ENCODE measurements at regions of chr11 and their contacts with region 1.

Region 1: DNA sequence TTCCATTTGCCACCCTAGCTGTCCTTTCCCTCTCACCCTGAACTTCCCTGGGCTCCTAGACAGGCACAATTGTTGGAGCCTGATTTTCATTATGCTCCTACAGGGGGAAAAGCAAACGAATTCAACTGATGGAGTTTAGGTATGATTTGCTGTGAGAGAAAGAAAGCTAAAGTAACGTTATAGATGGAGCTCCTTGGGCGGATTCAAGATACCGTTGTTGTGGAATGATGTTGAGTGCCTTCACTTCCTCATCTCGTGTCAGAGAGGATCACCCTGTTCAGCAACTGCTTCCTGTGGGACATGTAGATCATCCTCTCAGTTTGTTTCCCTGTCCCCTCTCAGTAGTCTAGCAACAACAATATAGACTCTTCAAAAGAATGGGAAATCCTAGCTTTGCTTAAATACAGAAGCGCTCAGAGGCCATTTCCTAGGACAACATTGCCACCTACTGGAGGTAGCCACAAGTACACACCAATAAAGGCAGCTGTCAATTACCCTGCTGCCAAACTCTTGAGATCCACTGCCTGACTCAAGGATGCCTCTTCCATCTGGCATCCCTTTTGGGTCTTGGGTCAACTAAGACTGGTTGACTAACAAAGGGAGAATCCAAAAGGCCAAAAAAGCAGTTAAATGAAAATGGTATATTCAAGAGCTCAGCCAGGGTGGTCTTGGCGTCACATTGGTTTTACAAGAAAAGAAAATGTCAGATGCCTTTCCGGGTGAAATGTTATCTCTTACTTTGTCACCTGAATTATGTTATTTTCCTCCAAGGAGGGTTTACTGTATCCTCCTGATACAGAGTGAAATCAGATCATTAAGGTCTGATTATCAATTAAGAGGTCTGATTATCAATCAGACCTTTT is 13.5 kb upstream of the DTX4 start:
- DNase-seq: peak; percentile 54
- ATAC-seq: peak; percentile 96
- H3K4me3 Mint-ChIP-seq: no peak overlapping the region
- H3K27ac Mint-ChIP-seq: no peak overlapping the region
- H3K4me1 Mint-ChIP-seq: peaks cover 8% of the 10 kb centered on the region
- H3K27me3 Mint-ChIP-seq: no peaks in the 10 kb centered on the region
- CTCF ChIP-seq: peak; percentile 54

Region 2: GRCh38 chr11:58900479-58901420 is 257.7 kb before region 1 on chr11:
- CTCF ChIA-PET with region 1: interaction called, 25 read pairs
- POLR2A ChIA-PET with region 1: interaction called, 3 read pairs
- DNase-seq: peak; percentile 96
- ATAC-seq: peak; percentile 77
- H3K4me3 Mint-ChIP-seq: peak overlapping the region; percentile 62
- H3K27ac Mint-ChIP-seq: peak overlapping the region; percentile 42; the same call in 1 of the 2 replicates
- H3K4me1 Mint-ChIP-seq: peaks cover 45% of the 10 kb centered on the region
- H3K27me3 Mint-ChIP-seq: peaks cover 48% of the 10 kb centered on the region
- CTCF ChIP-seq: peak; percentile 59; the same call in 1 of the 2 replicates

Region 3: GRCh38 chr11:58963528-58964104 is 194.8 kb before region 1 on chr11:
- CTCF ChIA-PET with region 1: interaction called, 12 read pairs
- POLR2A ChIA-PET with region 1: no interaction called
- DNase-seq: peak; percentile 74
- ATAC-seq: peak; percentile 94
- H3K4me3 Mint-ChIP-seq: peak overlapping the region; percentile 64
- H3K27ac Mint-ChIP-seq: peak overlapping the region; percentile 78; the same call in 1 of the 2 replicates
- H3K4me1 Mint-ChIP-seq: peaks cover 26% of the 10 kb centered on the region
- H3K27me3 Mint-ChIP-seq: peaks cover 65% of the 10 kb centered on the region
- CTCF ChIP-seq: no peak

Region 4: GRCh38 chr11:59135648-59136461 is 22.6 kb before region 1 on chr11:
- CTCF ChIA-PET with region 1: interaction called, 38 read pairs
- POLR2A ChIA-PET with region 1: no interaction called
- DNase-seq: peak; percentile 93
- ATAC-seq: peak; percentile 100
- H3K4me3 Mint-ChIP-seq: peak overlapping the region; percentile 59
- H3K27ac Mint-ChIP-seq: no peak overlapping the region
- H3K4me1 Mint-ChIP-seq: peaks cover 2% of the 10 kb centered on the region; the same call in 1 of the 2 replicates
- H3K27me3 Mint-ChIP-seq: peaks cover 6% of the 10 kb centered on the region; the same call in 1 of the 2 replicates
- CTCF ChIP-seq: peak; percentile 92

Region 5: DNA sequence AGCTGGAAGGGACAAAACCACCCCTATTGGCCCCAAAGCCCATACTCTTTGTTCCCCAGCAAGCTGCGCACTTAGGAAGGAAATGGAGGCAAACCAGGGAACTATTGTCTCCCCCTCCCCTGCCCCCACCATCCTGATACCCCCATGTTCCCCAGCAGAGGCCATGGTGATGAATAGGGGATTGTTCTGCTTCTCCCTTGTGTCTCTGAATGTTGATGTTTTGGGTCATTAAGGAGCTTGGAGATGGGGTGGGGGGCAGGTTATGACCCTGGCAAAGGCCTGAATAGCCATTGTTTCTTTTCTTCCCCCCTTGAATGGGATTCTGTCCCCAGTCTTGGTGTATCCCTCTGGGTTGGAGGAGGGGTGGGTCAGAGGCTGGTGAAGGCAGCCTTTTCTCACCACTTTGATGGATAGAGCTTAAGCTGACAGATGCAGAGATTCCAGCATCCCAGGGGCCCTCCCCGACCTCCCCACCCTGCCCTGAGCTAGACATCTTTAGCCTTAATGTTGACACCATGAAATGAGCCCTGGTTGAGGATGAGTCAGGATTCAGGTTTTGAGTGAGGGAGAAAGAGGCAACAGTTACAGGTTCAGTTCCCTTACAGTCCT is 21.8 kb after region 1 on chr11:
- CTCF ChIA-PET with region 1: interaction called, 10 read pairs
- POLR2A ChIA-PET with region 1: no interaction called
- DNase-seq: no peak
- ATAC-seq: no peak
- H3K4me3 Mint-ChIP-seq: no peak overlapping the region
- H3K27ac Mint-ChIP-seq: no peak overlapping the region
- H3K4me1 Mint-ChIP-seq: peaks cover 34% of the 10 kb centered on the region
- H3K27me3 Mint-ChIP-seq: no peaks in the 10 kb centered on the region; the same call in 1 of the 2 replicates
- CTCF ChIP-seq: no peak

Region 6: DNA sequence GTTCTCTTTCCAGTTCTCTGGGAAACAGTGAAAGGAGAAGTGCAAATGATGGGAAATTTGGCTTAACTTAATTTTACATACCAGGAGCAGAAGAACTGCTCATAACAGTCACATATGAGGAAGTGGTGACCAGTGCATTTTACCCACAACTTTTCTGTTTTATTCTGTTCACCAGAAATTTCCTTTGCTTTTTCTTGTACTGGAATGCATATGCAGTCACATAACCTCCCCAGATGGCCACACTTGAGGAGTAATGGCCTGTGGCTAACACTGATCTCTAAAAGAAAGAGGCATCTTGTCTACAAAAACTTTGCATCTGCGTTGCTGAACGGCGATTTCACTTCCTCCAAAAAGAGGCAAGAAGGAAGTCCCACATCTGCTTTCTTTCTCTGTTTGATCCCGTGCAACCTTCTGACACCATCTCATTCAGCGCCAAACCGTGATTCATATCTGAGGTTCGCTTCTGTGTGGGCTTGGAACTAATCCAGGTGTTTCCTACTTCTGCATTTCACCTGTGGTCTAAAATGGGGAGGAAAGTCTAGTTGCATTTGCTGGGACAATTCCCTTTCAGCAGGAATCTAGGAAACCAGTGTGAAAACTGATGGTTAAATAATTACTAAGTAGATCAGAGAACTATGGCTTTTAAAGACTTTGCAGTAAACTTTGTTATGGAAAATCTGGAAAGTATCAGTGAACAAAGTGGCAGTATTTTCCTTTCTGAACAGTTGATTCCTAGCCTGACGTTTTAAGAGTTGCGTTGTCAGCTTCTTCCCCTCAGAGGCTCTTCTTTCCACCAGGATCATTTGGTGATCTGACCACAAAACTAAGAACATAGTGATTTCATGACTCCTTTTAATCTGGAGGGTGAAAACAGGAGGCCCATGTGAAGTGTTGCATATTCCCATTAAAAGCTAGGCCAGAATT is 58.5 kb after region 1 on chr11:
- CTCF ChIA-PET with region 1: no interaction called
- POLR2A ChIA-PET with region 1: no interaction called
- DNase-seq: no peak
- ATAC-seq: no peak
- H3K4me3 Mint-ChIP-seq: no peak overlapping the region
- H3K27ac Mint-ChIP-seq: no peak overlapping the region
- H3K4me1 Mint-ChIP-seq: no peaks in the 10 kb centered on the region
- H3K27me3 Mint-ChIP-seq: no peaks in the 10 kb centered on the region; the same call in 1 of the 2 replicates
- CTCF ChIP-seq: no peak

Measured in WTC11 (cell line).